ENCODE measurements at regions of chr1 and their contacts with region 1.

Region 1: GRCh38 chr1:223824712-223825111 is 21.0 kb downstream of the TP53BP2 start:
- DNase-seq: no peak
- H3K4me3 ChIP-seq: no peak overlapping the region
- CTCF ChIP-seq: no peak

Region 2: GRCh38 chr1:223712194-223712849 is 112.4 kb before region 1 on chr1 and contains the start of gene CAPN2:
- CTCF ChIA-PET with region 1: no interaction called
- POLR2A ChIA-PET with region 1: no interaction called
- DNase-seq: no peak
- H3K4me3 ChIP-seq: peak within 1 kb of the TSS; percentile 95
- CTCF ChIP-seq: peak; percentile 73

Region 3: GRCh38 chr1:223811634-223812415 is 12.9 kb before region 1 on chr1:
- CTCF ChIA-PET with region 1: interaction called, 10 read pairs
- POLR2A ChIA-PET with region 1: no interaction called
- DNase-seq: no peak
- H3K4me3 ChIP-seq: no peak overlapping the region
- CTCF ChIP-seq: peak; percentile 41